Stomach (tissue), 19 donors: ENCODE measurements at regions of chr16 and their contacts with region 1.

Region 1: DNA sequence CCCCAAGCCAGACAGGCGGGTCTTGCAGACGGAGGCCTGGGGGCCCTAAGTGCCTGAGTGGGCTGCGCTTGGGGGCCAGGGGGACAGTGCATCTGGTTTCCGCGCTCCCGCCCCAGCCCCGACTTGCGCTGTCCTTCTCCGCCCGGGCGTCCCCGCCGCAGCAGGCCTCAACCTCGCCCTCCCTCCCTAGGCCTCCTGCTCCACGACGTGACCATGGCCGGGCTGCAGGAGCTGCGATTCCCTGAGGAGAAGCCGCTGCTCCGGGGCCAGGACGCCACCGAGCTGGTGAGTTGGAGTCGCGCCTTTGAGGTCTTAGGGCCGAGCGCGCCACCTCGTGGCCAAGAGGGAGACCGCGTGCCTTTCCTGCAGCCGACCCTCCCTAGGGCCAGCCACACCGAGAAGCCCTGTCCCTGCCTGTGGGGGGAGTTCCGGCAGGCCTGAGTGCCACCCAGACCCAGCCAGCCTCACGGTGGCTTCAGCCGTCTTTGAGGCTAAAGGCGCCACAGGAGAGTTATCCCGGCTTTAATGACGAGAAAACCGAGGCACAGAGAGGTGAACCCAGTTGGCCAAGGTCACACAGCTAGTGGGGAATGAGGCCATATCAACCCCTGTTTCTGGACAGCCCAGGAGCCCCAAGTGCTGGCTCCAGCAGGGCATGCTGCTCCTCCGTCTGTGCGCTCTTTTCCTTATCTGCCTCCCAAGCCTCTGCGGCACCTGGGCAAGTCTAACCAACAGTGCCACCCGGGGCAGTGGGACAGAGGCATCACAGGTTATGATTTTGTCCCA is 12.2 kb upstream of the NDRG4 start:
- DNase-seq: peak; percentile 84 to 94
- H3K4me3 ChIP-seq: peak overlapping the region in 1 of 4 donors; percentile 32
- H3K27ac ChIP-seq: no peak overlapping the region
- H3K4me1 ChIP-seq: peaks cover 0 to 8% (median 6%) of the 10 kb centered on the region in 4 donors
- H3K27me3 ChIP-seq: no peaks in the 10 kb centered on the region
- CTCF ChIP-seq: peak in 5 of 7 experiments; percentile 83 to 92 (median 89)
- EP300 ChIP-seq: no peak
- POLR2A ChIP-seq: no peak

Region 2: GRCh38 chr16:58336332-58337089 is 151.2 kb before region 1 on chr16:
- intact Hi-C with region 1: loop called (anchors 5 kb)
- DNase-seq: peak; percentile 87 to 92
- H3K4me3 ChIP-seq: peak overlapping the region; percentile 11 to 31 (median 20)
- H3K27ac ChIP-seq: no peak overlapping the region
- H3K4me1 ChIP-seq: peaks cover 0 to 10% (median 6%) of the 10 kb centered on the region in 4 donors
- H3K27me3 ChIP-seq: peaks cover 0 to 13% (median 0%) of the 10 kb centered on the region in 3 donors
- CTCF ChIP-seq: peak in 5 of 7 experiments; percentile 81 to 93 (median 92)
- EP300 ChIP-seq: no peak
- POLR2A ChIP-seq: no peak